Activated CD4-positive, alpha-beta T cell treated with anti-CD3 and anti-CD28 coated beads, Interleukin-2, amount 10 ng/mL, durations not matched to agents 24 days and 14 days (primary cell): ENCODE measurements at regions of chr19 and their contacts with region 1.

Region 1: GRCh38 chr19:35995048-35995993 is at the start of gene SDHAF1:
- DNase-seq: peak; percentile 98
- H3K4me3 Mint-ChIP-seq: peak within 1 kb of the TSS; percentile 92
- H3K27ac Mint-ChIP-seq: peak within 1 kb of the TSS; percentile 92
- H3K4me1 Mint-ChIP-seq: peaks cover 31% of the 10 kb centered on the region
- H3K27me3 Mint-ChIP-seq: no peaks in the 10 kb centered on the region
- total RNA-seq, gene SDHAF1: 21.4 and 23.1 TPM in 2 replicates

Region 2: DNA sequence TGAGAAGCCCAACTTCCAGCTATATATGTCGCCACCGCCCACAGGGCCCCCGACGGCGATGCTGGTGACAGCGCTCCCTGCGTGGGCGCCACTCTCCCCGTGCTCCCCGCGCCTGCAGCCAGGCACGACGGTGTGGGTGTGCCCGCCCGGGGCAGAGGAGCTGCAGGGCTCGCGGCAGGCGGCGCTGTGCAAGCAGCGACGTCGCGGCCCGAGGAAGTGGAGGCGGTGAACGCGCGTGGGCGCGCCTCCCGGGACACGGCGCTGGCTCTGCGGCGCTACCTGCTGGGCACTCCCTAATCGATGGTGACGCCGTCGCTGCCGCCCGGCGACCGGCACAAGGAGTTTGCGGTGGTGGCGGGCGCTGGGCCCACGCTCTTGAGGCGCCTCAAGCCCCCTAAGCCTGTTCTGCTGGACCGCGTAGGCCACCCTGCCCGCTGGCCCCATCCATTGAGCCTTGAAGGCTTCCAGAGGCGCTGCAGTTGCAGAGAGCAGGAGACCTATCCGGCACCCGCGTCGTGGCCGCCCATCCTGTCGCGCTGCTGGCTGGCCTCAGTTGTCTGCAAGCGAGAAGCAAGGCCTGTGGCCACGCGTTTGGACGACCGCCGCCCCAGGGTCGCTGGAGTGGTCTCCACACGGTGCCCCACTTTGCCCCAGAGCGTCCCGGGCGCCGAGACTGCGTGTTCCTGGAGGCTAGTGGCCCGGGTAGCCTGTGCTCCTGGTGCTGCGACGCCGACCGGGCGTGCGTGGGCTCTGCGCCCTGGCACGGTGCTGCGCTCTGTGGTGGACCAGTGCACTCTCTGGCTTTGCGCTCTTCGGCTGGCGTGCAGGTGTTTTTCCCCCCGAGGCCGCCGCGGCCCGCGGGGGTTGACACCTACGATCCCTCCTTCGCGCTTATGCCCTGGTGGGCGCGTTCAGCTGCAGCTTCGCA is 36.0 kb before region 1 on chr19:
- intact Hi-C with region 1: loop called (anchors 5 kb)
- DNase-seq: peak; percentile 93
- H3K4me3 Mint-ChIP-seq: peak overlapping the region; percentile 58
- H3K27ac Mint-ChIP-seq: no peak overlapping the region
- H3K4me1 Mint-ChIP-seq: peaks cover 16% of the 10 kb centered on the region
- H3K27me3 Mint-ChIP-seq: peaks cover 15% of the 10 kb centered on the region

Region 3: GRCh38 chr19:36014029-36014924 is 19.0 kb after region 1 on chr19 and contains the start of gene ALKBH6:
- intact Hi-C with region 1: loop called (anchors 1 kb)
- DNase-seq: peak; percentile 100
- H3K4me3 Mint-ChIP-seq: peak within 1 kb of the TSS; percentile 97
- H3K27ac Mint-ChIP-seq: peak within 1 kb of the TSS; percentile 95
- H3K4me1 Mint-ChIP-seq: peaks cover 37% of the 10 kb centered on the region
- H3K27me3 Mint-ChIP-seq: no peaks in the 10 kb centered on the region
- total RNA-seq, gene ALKBH6: 46.1 and 50.7 TPM in 2 replicates